Activated CD4-positive, alpha-beta T cell treated with anti-CD3 and anti-CD28 coated beads, Interleukin-2, amount 10 ng/mL, durations not matched to agents 24 days and 14 days (primary cell): ENCODE measurements at regions of chr9 and their contacts with region 1.

Region 1: GRCh38 chr9:111298731-111299598 is 31.1 kb downstream of the OR2K2 start:
- DNase-seq: peak; percentile 60
- H3K4me3 Mint-ChIP-seq: no peak overlapping the region
- H3K27ac Mint-ChIP-seq: no peak overlapping the region
- H3K4me1 Mint-ChIP-seq: no peaks in the 10 kb centered on the region
- H3K27me3 Mint-ChIP-seq: peaks cover 6% of the 10 kb centered on the region

Region 2: DNA sequence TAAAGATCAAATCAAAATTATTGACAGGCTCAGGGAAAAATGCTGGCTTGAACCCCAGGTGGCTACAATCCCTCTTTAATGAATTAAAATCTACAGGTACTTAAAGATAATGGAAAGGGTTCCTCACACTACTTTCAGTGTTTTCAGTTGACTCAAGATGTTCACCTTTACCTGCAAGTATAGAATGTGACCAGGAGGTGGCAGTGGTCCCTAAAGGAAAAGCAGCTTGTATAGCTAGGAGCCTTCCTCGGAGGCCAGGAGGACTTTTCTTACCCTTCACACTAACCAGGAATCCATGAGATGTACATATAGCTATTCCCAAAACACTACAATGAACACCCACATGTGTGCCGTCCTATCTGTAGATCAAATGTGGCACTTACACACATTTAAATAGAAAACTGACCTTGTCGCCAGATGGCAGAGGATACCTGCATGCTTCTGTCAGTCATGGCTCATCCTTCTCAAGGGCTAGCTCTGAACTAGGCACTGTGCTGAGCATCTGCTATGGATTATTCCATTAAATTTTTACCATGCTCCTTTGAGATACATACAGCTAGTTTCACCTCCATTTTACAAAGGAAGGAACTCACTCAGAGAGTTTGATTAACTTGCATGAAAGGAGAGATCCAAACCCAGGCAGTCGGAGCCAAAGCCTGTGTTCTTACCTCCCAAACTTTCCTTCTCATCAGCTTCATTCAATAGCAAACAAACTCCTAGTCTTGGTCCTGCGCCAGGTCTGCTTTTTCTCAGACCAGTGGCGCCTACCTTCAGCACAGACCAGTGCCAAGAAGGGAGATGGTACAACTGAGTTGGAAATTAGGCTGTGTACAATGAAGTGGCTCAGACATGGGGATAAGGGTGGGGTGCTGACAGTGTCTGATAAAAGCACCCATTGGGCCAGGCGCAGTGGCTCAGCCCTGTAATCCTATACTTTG is 1115.5 kb before region 1 on chr9:
- intact Hi-C with region 1: loop called (anchors 5 kb)
- DNase-seq: peak; percentile 88
- H3K4me3 Mint-ChIP-seq: no peak overlapping the region
- H3K27ac Mint-ChIP-seq: no peak overlapping the region
- H3K4me1 Mint-ChIP-seq: peaks cover 13% of the 10 kb centered on the region
- H3K27me3 Mint-ChIP-seq: peaks cover 5% of the 10 kb centered on the region

Region 3: GRCh38 chr9:111187376-111187775 is 111.6 kb before region 1 on chr9:
- intact Hi-C with region 1: no loop called
- DNase-seq: no peak
- H3K4me3 Mint-ChIP-seq: no peak overlapping the region
- H3K27ac Mint-ChIP-seq: no peak overlapping the region
- H3K4me1 Mint-ChIP-seq: no peaks in the 10 kb centered on the region
- H3K27me3 Mint-ChIP-seq: no peaks in the 10 kb centered on the region

Region 4: DNA sequence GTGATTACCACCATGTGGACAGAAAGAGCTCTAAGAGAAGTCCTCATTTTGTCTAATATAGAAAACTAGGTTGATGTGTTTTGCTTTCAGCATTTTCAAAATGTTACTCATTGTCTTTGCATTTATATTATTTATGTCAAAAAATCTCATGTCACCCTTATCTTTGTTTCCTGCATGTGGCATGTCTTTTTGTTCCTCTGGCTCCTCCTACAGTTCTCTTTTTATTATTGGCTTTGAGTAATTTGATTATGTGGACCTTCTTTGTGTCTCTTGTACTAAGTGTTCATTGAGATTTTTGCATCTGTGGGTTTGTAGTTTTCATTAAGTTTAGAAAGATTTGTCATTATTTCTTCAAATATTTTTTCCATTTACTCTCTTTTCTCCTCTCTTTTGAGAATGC is 421.2 kb after region 1 on chr9:
- intact Hi-C with region 1: no loop called
- DNase-seq: no peak
- H3K4me3 Mint-ChIP-seq: no peak overlapping the region
- H3K27ac Mint-ChIP-seq: no peak overlapping the region
- H3K4me1 Mint-ChIP-seq: peaks cover 3% of the 10 kb centered on the region
- H3K27me3 Mint-ChIP-seq: no peaks in the 10 kb centered on the region